Endothelial cell of umbilical vein (primary cell): ENCODE measurements at regions of chr1 and their contacts with region 1.

Region 1: DNA sequence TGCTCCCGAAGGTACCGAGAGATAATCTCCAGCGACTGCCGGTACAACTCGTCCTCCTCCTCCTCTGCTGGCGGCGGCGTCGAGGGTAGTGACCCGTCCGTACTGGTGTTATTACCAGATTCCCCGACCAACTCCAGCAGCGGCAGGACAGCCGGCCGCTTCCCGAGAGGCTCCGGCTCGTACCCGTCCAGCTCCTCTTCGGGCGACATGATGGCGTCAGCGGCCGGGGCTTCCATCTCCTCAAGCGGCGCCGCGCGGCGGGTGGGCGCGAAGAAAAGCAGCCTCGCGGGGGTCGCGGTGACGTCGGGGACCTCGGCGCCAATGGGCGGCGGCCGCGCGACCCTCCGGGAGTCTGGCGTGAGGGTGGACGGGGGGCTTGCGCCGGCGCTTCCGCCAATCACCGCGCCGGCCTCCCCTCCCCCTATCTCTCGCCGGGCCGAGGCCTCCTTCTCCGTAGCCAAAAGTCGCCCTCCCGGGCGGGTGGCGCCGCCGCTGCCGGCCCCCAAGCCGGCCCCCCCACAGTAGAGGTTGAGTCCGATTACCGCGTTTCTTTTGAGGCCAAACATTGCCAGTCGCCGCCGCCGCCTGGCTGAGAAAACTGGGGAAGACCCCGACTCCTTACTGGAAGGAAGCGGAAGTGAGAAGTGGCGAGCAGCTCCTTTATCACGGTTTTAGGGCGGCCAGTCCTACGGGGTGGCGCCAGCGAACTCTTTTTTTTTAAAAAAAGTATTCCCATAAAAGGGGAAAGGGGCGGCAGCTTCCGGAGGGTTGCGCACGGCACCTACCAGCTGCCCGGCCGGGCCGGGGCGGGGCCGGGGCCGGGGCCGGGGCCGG is at the start of gene MCL1:
- DNase-seq: peak; percentile 96
- H3K4me3 ChIP-seq: peak within 1 kb of the TSS; percentile 91 to 99 (median 92)
- H3K27ac ChIP-seq: peak within 1 kb of the TSS; percentile 98
- H3K4me1 ChIP-seq: peaks cover 28% of the 10 kb centered on the region
- H3K27me3 ChIP-seq: no peaks in the 10 kb centered on the region
- CTCF ChIP-seq: no peak
- POLR2A ChIP-seq: peak; percentile 99
- total RNA-seq, gene MCL1: 186 and 212 TPM in 2 replicates

Region 2: DNA sequence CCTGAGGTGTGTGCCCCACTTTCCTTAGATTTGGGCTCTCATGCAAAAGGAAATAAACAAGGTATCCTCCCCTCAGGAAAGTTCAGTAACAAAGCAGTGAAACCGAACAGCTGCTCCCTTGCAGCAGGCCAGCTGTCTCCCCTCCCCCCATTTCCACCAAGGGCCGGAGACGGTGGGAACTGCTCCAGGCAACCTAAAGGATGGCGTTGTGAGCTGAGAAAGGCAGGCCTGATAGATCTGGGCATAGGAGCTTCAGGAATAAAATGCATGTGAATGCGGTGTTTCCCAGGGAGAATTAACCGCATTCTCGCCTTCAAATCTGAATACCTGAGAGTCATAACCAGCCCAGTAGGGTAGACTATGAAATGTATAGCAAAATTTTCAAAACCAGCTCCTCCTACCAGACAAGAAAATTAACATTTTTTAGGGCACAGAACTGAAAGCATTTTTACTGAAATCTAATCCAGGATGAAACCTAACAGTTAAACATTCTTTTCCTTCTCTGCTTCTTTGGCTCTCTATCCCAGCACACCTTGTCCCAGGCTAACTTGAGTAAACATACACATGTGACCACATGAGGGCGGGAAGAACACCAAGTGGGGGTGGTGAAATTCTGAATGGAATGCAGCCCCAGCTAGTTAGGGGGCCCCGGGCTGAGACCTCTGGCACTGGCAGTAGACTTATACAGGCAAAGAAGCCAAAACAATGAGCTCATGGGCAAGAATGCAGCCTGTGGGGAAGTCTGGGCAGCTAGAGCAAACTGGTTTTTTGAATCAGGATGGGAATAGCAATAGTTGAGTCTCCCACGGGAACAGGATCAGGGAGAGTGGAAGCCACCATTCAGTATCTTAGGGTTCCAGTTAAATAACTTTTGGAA is 11.2 kb before region 1 on chr1:
- CTCF ChIA-PET with region 1: interaction called, 184 read pairs
- POLR2A ChIA-PET with region 1: interaction called, 39 read pairs
- dilution Hi-C with region 1: no loop called
- intact Hi-C with region 1: no loop called
- DNase-seq: peak; percentile 98
- H3K4me3 ChIP-seq: no peak overlapping the region
- H3K27ac ChIP-seq: peak overlapping the region; percentile 84
- H3K4me1 ChIP-seq: peaks cover 49% of the 10 kb centered on the region
- H3K27me3 ChIP-seq: no peaks in the 10 kb centered on the region
- CTCF ChIP-seq: no peak
- POLR2A ChIP-seq: no peak

Region 3: DNA sequence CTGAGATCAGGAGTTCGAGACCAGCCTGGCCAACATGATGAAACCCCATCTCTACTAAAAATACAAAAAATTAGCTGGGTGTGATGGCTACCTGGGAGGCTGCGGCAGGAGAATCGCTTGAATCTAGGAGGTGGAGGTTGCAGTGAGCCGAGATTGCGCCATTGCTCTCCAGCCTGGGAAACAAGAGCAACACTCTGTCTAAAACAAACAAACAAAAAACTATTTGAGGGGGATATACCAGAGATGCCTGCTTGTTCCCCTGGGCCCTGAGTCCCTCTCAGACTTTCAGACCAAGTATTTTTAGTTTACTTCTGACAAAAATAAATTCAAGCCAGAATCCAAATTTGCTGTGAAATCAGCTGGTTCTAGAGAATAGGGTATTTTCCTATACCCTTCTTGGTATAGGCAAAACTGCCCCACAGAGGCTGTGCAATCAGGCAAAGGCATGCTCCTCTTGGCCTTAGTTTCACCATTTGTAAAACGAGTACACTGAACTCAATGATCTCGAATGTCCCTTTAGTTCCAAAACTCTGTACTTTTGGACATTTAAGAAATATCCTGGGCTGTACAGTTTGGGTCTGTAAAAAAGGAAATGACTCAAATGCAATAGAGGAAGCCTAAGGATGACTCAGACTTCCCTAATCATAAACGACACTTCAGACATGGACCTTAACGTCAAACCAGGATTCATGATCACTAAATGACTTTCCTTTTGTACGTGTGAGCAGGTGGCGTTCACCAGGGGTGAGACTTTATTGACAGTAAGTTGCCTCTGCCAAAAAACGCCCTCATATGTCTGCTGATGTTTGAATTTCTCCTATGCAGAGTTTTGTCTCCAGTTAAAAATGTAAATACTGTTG is 34.1 kb after region 1 on chr1:
- CTCF ChIA-PET with region 1: interaction called, 147 read pairs
- POLR2A ChIA-PET with region 1: interaction called, 12 read pairs
- dilution Hi-C with region 1: no loop called
- intact Hi-C with region 1: loop called (anchors 1 kb)
- DNase-seq: peak; percentile 94
- H3K4me3 ChIP-seq: peak overlapping the region in 1 of 3 experiments; percentile 14
- H3K27ac ChIP-seq: peak overlapping the region; percentile 100
- H3K4me1 ChIP-seq: peaks cover 43% of the 10 kb centered on the region
- H3K27me3 ChIP-seq: no peaks in the 10 kb centered on the region
- CTCF ChIP-seq: no peak
- POLR2A ChIP-seq: peak; percentile 78

Region 4: GRCh38 chr1:150661156-150661555 is 82.0 kb after region 1 on chr1:
- CTCF ChIA-PET with region 1: no interaction called
- POLR2A ChIA-PET with region 1: no interaction called
- dilution Hi-C with region 1: loop called (anchors 10 kb)
- intact Hi-C with region 1: no loop called
- DNase-seq: no peak
- H3K4me3 ChIP-seq: no peak overlapping the region
- H3K27ac ChIP-seq: no peak overlapping the region
- H3K4me1 ChIP-seq: no peaks in the 10 kb centered on the region
- H3K27me3 ChIP-seq: no peaks in the 10 kb centered on the region
- CTCF ChIP-seq: no peak
- POLR2A ChIP-seq: no peak

Region 5: GRCh38 chr1:150813058-150813707 is 234.0 kb after region 1 on chr1:
- CTCF ChIA-PET with region 1: interaction called, 10 read pairs
- POLR2A ChIA-PET with region 1: no interaction called
- dilution Hi-C with region 1: no loop called
- intact Hi-C with region 1: loop called (anchors 5 kb)
- DNase-seq: peak; percentile 83
- H3K4me3 ChIP-seq: no peak overlapping the region
- H3K27ac ChIP-seq: no peak overlapping the region
- H3K4me1 ChIP-seq: peaks cover 2% of the 10 kb centered on the region
- H3K27me3 ChIP-seq: no peaks in the 10 kb centered on the region
- CTCF ChIP-seq: peak; percentile 76 to 81
- POLR2A ChIP-seq: no peak